ENCODE measurements at regions of chrX and their contacts with region 1.

Region 1: GRCh38 chrX:131331152-131331551 is 42.0 kb upstream of the IGSF1 start:
- DNase-seq: no peak
- ATAC-seq: no peak
- H3K4me3 ChIP-seq: no peak overlapping the region
- H3K27ac ChIP-seq: no peak overlapping the region
- H3K4me1 ChIP-seq: no peaks in the 10 kb centered on the region
- H3K27me3 ChIP-seq: peaks cover 0 to 9% (median 0%) of the 10 kb centered on the region in 7 donors
- CTCF ChIP-seq: no peak

Region 2: GRCh38 chrX:131827935-131828334 is 496.8 kb after region 1 on chrX:
- intact Hi-C with region 1: no loop called
- DNase-seq: no peak
- ATAC-seq: peak in 1 of 8 donors; percentile 33
- H3K4me3 ChIP-seq: no peak overlapping the region
- H3K27ac ChIP-seq: no peak overlapping the region
- H3K4me1 ChIP-seq: peaks cover 0 to 18% (median 0%) of the 10 kb centered on the region in 9 donors
- H3K27me3 ChIP-seq: peaks cover 0 to 41% (median 0%) of the 10 kb centered on the region in 7 donors
- CTCF ChIP-seq: peak in 6 of 9 donors; percentile 13 to 36 (median 25)

Region 3: DNA sequence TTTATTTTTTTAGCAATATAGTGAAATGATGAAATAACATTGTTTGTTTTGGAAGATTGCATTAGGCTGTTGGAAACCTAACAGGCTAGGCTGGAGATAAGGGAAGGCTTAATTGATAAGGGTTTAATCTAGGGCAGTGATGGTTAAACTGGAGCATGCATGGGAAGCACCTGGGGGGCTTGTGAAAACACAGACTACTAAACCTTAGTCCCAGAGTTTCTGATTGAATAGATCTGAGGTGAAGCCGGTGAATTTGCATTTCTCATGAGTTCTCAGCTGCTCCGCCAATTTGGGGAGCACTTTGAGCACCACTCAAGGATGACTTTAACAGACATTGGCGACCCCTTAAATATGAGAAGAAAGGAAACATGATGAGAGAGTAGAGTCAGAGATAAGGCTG is 703.5 kb after region 1 on chrX:
- intact Hi-C with region 1: loop called in 1 of 10 experiments (anchors 5 kb)
- DNase-seq: no peak
- ATAC-seq: no peak
- H3K4me3 ChIP-seq: no peak overlapping the region
- H3K27ac ChIP-seq: no peak overlapping the region
- H3K4me1 ChIP-seq: no peaks in the 10 kb centered on the region
- H3K27me3 ChIP-seq: peaks cover 0 to 54% (median 0%) of the 10 kb centered on the region in 7 donors
- CTCF ChIP-seq: no peak

Measured in heart right ventricle (tissue), 16 donors.